H1 (cell line): ENCODE measurements at regions of chr13 and their contacts with region 1.

Region 1: DNA sequence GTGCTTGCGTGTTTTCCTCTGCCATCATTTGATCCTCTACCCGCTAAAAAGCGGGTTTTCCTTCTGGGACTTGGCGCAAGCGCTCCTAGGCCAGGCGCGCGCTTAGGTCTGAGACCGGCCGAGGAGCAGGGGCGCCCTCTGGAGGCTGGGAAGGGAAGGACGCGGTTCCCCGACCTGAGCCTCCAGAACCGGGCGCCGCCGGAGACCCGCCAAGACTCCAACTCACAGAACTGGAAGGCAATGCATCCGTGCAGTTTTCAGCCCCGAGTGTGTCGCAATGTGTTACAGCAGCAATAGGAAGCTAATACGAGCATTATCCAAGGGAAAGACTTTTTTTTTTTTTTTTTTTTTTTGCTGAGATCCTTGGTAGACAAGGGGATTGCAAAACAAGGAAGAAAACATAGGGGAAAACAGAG is 190.9 kb downstream of the COL4A1 start:
- DNase-seq: peak in 1 of 2 experiments; percentile 93
- H3K4me3 ChIP-seq: no peak overlapping the region
- H3K27ac ChIP-seq: no peak overlapping the region
- H3K4me1 ChIP-seq: peaks cover 0 to 5% (median 2%) of the 10 kb centered on the region in 4 experiments; a peak in 2 of 7 replicates
- H3K27me3 ChIP-seq: peaks cover 0 to 7% (median 2%) of the 10 kb centered on the region in 4 experiments; a peak in 4 of 7 replicates
- CTCF ChIP-seq: peak; percentile 83 to 87 (median 84)
- EP300 ChIP-seq: no peak
- POLR2A ChIP-seq: no peak
- RAD21 ChIP-seq: peak; percentile 85 to 88

Region 2: GRCh38 chr13:110103534-110103933 is 12.5 kb before region 1 on chr13:
- CTCF ChIA-PET with region 1: interaction called, 20 read pairs
- POLR2A ChIA-PET with region 1: no interaction called
- DNase-seq: no peak
- H3K4me3 ChIP-seq: no peak overlapping the region
- H3K27ac ChIP-seq: no peak overlapping the region
- H3K4me1 ChIP-seq: peaks cover 0 to 3% (median 0%) of the 10 kb centered on the region in 4 experiments; a peak in 2 of 7 replicates
- H3K27me3 ChIP-seq: no peaks in the 10 kb centered on the region
- CTCF ChIP-seq: no peak
- EP300 ChIP-seq: no peak
- POLR2A ChIP-seq: no peak
- RAD21 ChIP-seq: no peak

Region 3: DNA sequence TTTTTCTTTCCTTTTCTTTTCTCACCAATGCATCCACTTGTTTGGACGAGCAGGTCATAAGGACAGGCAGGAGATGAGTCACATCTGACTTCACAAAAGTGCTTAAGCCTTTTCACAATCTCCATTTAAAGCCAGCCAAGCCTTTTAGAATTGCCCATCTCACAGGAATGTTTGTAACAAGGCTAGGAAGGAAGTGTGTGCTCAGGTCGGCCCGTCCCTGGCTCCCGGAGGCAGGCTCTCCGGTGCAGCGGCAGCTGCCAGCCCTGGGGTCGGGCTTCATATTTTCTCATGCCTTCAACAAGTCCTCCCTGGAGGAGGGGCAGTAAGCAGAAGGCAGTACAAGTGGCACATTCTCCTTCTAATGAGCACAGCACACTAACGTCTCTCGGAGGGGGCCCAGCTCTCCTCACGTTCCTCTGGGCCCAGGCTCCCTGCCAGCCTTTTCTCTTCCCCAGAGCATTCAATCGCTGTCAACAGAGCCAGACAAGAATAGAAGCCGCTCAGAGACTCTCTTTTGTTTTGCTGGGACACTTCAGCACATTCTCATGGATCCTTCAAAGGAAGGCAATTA is 10.4 kb after region 1 on chr13:
- CTCF ChIA-PET with region 1: interaction called, 13 read pairs
- POLR2A ChIA-PET with region 1: no interaction called
- DNase-seq: no peak
- H3K4me3 ChIP-seq: peak overlapping the region in 1 of 4 experiments; percentile 15; a peak in 1 of 8 replicates
- H3K27ac ChIP-seq: no peak overlapping the region
- H3K4me1 ChIP-seq: peaks cover 0 to 13% (median 8%) of the 10 kb centered on the region in 4 experiments; a peak in 4 of 7 replicates
- H3K27me3 ChIP-seq: peaks cover 0 to 4% (median 1%) of the 10 kb centered on the region in 4 experiments; a peak in 2 of 7 replicates
- CTCF ChIP-seq: no peak
- EP300 ChIP-seq: no peak
- POLR2A ChIP-seq: no peak
- RAD21 ChIP-seq: no peak

Region 4: DNA sequence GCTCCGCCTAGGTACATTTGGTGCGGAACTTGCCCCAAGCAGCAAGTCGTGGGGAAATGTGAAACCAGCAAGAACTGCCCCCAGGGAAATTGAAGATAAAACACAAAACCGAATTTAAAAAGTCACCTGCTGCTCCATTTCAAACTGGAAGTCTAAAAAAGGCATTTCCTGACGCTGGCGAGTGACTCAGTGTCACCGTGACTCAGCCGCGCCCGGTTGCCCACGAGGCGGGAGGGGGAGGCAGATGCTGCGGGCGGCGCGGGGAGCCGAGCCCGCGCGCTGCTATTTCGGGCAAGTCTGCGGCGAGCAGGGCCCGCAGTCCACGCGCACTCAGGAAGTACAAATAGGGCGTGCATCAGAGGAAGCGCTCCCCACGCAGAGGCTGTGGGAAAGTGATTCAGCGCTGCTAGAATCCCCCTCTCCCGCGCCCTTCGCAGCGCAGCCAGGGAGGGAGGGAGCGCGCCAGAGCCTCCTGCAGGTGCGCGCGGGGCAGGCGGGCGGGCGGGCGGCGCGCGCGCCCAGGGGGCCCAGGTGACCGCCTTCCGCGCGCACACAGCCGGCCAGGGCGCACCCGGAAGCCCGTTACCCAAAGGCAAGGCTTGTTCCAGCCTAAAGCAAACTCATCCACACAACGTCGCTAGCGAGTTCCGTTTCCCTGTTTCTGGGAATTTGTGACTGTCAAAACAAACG is 22.1 kb after region 1 on chr13:
- CTCF ChIA-PET with region 1: interaction called, 17 read pairs
- POLR2A ChIA-PET with region 1: interaction called, 4 read pairs
- DNase-seq: no peak
- H3K4me3 ChIP-seq: peak overlapping the region; percentile 48 to 78 (median 64)
- H3K27ac ChIP-seq: no peak overlapping the region
- H3K4me1 ChIP-seq: peaks cover 12 to 25% (median 22%) of the 10 kb centered on the region in 4 experiments
- H3K27me3 ChIP-seq: peaks cover 0 to 13% (median 7%) of the 10 kb centered on the region in 4 experiments; a peak in 5 of 7 replicates
- CTCF ChIP-seq: peak in 2 of 3 experiments; percentile 7 to 26; a peak in 2 of 4 replicates
- EP300 ChIP-seq: no peak
- POLR2A ChIP-seq: no peak
- RAD21 ChIP-seq: peak in 1 of 2 experiments; percentile 33; a peak in 2 of 4 replicates